ENCODE measurements at regions of chr3 and their contacts with region 1.

Region 1: DNA sequence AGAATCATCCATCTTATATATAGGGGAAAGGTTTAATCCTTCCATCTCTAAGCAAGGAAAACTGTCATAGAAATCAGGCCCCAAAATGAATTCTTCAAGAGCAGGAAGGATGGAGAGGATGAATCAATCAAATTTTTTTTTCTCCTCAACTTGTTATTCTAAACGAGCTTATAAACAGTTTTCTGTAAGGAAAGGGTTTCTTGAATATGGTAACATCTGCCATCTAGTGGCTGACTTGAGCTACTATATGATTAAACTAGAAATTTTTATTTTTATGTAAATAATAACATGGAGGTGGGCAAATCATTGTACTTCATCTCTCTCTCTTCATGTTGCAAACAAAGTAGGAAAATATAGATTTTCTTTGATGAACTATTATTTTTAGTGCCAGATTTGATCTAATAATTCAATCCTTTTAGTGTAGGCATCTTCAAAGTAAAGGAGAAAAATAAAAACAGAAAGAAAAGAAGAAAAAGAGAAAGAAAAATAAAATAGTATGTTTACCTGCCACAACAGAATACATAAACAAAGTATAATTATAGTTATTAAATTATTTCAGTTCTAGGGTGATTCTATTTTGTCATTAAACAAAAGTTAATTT is 146.6 kb downstream of the SERPINI1 start:
- DNase-seq: no peak

Region 2: GRCh38 chr3:167406875-167407492 is 475.2 kb before region 1 on chr3:
- intact Hi-C with region 1: loop called (anchors 10 kb)
- DNase-seq: no peak

Region 3: GRCh38 chr3:167691366-167691765 is 190.8 kb before region 1 on chr3:
- intact Hi-C with region 1: loop called (anchors 10 kb)
- DNase-seq: no peak

Region 4: DNA sequence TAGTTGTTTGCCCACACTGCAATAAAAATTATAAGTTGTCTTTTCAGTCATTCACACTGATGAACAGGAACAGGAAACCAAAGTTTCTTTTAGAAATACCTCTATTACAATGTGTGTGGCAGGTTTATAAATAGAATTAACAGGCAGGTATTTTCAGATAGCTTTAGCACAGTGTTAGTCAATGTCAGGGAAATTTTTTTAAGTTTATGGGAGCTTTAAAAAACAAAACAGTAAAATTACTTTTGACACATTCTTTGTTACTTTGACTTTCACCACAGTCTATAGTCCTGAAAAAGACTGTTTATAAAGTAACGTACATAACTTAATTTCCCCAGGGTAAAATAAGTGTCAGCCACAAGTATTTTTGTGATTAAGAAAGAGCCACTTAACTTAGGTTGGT is 108.6 kb before region 1 on chr3:
- intact Hi-C with region 1: no loop called
- DNase-seq: no peak

Region 5: GRCh38 chr3:167823738-167824137 is 58.4 kb before region 1 on chr3:
- intact Hi-C with region 1: no loop called
- DNase-seq: no peak

Region 6: DNA sequence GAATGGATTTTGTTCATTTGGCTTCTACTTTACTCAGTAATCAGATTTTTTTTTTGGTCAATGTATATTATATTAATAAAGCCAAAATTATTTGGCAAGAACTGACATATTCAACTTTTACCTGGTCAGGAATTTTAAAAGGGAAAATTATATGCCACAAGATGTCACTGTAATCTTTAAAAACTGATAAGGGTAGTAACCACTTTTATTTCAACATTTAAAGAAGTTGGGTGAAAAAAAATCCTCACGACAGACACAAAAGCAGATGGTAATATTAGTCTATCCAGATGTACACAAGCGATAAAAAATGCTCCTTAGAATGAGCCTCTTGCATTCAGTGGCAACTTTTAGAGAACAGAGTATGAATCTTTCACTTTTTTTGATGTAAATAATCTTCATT is 44.7 kb before region 1 on chr3:
- intact Hi-C with region 1: loop called (anchors 1 kb)
- DNase-seq: no peak

Measured in cardiac septum (tissue), 1 donor.